A673 (cell line): ENCODE measurements at regions of chr2 and their contacts with region 1.

Region 1: DNA sequence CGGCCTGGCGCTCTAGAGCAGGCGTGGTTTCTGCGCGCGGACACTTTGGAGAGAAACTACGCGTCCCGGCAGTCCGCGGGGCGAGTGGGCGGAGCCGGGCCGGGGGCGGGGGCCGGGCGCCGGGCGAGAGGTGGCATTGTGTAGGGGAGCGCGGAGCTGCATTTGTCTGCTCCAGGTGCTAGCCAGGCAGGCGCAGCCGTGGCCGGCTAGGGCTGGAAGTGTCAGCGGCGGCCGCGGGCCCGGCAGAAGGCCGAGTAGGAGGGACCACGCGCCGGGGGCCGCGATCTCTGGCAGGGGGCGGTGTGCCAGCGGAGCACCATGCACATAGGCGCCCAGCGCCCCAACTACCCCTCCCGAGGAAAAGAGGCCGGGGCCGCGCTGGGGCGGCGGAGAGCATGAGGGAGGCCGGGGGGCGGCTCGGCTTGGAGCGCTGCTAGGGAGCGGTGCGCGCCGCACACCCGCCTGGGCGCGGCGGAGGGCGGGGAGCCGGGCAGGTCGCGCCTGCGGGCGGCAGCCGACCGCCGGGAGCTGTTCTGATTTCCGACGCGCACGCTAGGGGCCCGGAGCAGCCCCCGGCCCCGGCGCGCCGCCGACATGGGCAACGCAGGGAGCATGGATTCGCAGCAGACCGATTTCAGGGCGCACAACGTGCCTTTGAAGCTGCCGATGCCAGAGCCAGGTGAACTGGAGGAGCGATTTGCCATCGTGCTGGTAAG is at the start of gene FMNL2:
- DNase-seq: peak; percentile 91
- H3K4me3 ChIP-seq: peak within 1 kb of the TSS; percentile 97
- H3K27ac ChIP-seq: peak within 1 kb of the TSS; percentile 82
- H3K4me1 ChIP-seq: peaks cover 14% of the 10 kb centered on the region
- H3K27me3 ChIP-seq: no peaks in the 10 kb centered on the region
- CTCF ChIP-seq: peak; percentile 29; the same call in 1 of the 2 replicates
- total RNA-seq, gene FMNL2: 42.2 and 43.1 TPM in 2 replicates

Region 2: GRCh38 chr2:152432206-152432653 is 97.1 kb after region 1 on chr2:
- CTCF ChIA-PET with region 1: no interaction called
- POLR2A ChIA-PET with region 1: no interaction called
- intact Hi-C with region 1: loop called (anchors 1 kb)
- DNase-seq: peak; percentile 97
- H3K4me3 ChIP-seq: no peak overlapping the region
- H3K27ac ChIP-seq: peak overlapping the region; percentile 90
- H3K4me1 ChIP-seq: peaks cover 88% of the 10 kb centered on the region
- H3K27me3 ChIP-seq: no peaks in the 10 kb centered on the region
- CTCF ChIP-seq: no peak

Region 3: DNA sequence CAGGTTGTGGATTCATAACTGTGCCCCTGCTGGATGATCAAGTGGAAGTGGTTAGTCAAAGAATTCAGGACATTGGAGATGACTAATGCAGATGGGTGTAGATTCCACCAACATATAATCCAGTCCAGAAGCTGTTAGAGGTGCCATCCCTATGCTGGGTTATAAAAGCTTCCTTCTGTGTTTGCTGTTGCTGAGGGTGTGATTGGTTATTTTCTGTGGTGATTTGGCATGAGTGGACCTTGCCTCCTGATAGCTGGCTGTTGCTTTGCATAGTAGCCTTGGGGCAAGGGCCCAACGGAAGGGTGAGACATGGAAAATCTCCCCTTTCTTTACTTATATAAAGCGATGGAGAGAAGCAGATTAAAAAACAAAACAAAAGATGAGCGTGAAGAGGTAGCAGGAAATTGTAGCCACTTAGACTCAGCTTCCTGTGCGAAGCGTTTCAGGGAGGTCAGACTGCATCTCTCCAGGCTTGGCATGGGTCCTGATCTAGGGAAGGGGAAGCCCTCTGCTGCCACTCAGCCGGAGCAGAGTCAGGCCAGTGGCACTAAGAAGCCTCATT is 190.2 kb after region 1 on chr2:
- CTCF ChIA-PET with region 1: no interaction called
- POLR2A ChIA-PET with region 1: no interaction called
- intact Hi-C with region 1: no loop called
- DNase-seq: peak; percentile 76
- H3K4me3 ChIP-seq: no peak overlapping the region
- H3K27ac ChIP-seq: peak overlapping the region; percentile 6
- H3K4me1 ChIP-seq: peaks cover 25% of the 10 kb centered on the region
- H3K27me3 ChIP-seq: no peaks in the 10 kb centered on the region
- CTCF ChIP-seq: no peak

Region 4: GRCh38 chr2:152558158-152558984 is 223.2 kb after region 1 on chr2:
- CTCF ChIA-PET with region 1: no interaction called
- POLR2A ChIA-PET with region 1: no interaction called
- intact Hi-C with region 1: loop called (anchors 5 kb)
- DNase-seq: no peak
- H3K4me3 ChIP-seq: no peak overlapping the region
- H3K27ac ChIP-seq: peak overlapping the region; percentile 20
- H3K4me1 ChIP-seq: peaks cover 21% of the 10 kb centered on the region
- H3K27me3 ChIP-seq: no peaks in the 10 kb centered on the region
- CTCF ChIP-seq: no peak